H1 (cell line): ENCODE measurements at regions of chr4 and their contacts with region 1.

Region 1: DNA sequence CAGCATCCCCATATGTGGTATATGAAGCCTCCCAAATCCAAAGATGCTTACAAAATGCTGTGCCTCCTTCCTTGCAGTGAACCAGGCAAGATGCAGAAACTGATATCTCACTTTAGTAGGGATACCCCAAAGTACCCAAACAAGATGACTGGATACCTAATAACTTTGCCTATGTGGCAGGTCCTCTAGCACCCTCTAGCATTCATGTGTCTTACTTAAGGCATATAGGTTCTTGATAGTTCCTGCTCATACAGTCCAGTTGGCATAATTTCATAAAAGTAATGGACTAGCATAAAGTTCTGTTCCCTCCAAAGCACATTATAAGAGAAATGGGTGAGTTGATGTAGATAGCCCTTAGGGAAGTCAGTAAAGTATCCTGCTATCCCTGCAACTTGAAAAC is 36.8 kb upstream of the SPP1 start:
- DNase-seq: no peak
- H3K4me3 ChIP-seq: no peak overlapping the region
- H3K27ac ChIP-seq: no peak overlapping the region
- H3K4me1 ChIP-seq: peaks cover 0 to 3% (median 0%) of the 10 kb centered on the region in 4 experiments; a peak in 3 of 7 replicates
- H3K27me3 ChIP-seq: no peaks in the 10 kb centered on the region
- CTCF ChIP-seq: no peak
- EP300 ChIP-seq: no peak
- POLR2A ChIP-seq: no peak
- RAD21 ChIP-seq: peak in 1 of 2 experiments; percentile 7; a peak in 1 of 4 replicates

Region 2: DNA sequence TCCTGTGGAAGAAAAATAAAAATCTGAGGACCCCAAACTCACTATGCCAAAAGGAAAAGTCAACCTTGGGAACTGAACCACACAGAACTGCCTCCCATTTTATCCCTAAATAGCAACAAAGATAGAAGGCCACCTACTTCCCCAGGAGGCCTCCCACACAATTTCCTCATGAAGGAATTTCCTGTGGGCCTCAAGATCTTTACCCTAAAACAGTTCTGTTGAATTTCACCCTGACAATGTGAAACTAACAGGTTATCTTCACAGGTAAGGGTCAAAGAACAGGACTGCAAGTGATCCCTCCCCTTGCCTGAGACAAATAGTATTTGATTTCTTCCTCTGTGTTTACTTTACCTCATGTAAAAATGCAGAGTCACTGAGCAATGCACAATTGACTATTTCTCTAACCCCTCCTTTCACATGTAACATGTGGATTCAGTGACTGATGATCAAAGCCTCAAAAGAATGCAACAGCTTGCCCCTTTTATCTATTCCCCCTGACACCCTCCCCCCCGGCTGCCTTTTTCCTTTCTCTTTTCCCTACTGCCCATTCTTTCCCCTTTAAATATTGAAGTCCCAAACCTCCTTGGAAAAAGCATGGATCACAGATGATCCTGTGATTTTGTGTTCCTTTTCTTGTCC is 72.7 kb before region 1 on chr4:
- CTCF ChIA-PET with region 1: interaction called, 5 read pairs
- POLR2A ChIA-PET with region 1: interaction called, 369 read pairs
- DNase-seq: peak in 1 of 2 experiments; percentile 47
- H3K4me3 ChIP-seq: peak overlapping the region in 3 of 4 experiments; percentile 15 to 55 (median 15); a peak in 3 of 8 replicates
- H3K27ac ChIP-seq: peak overlapping the region; percentile 59; the same call in 1 of the 2 replicates
- H3K4me1 ChIP-seq: peaks cover 0 to 14% (median 7%) of the 10 kb centered on the region in 4 experiments; a peak in 3 of 7 replicates
- H3K27me3 ChIP-seq: no peaks in the 10 kb centered on the region
- CTCF ChIP-seq: no peak
- EP300 ChIP-seq: no peak; a peak in 1 of 3 replicates
- POLR2A ChIP-seq: peak; percentile 45 to 60; a peak in 2 of 3 replicates
- RAD21 ChIP-seq: no peak

Region 3: GRCh38 chr4:87884976-87885549 is 53.7 kb before region 1 on chr4:
- CTCF ChIA-PET with region 1: no interaction called
- POLR2A ChIA-PET with region 1: no interaction called
- DNase-seq: no peak
- H3K4me3 ChIP-seq: no peak overlapping the region
- H3K27ac ChIP-seq: no peak overlapping the region
- H3K4me1 ChIP-seq: no peaks in the 10 kb centered on the region
- H3K27me3 ChIP-seq: no peaks in the 10 kb centered on the region
- CTCF ChIP-seq: no peak
- EP300 ChIP-seq: no peak
- POLR2A ChIP-seq: no peak
- RAD21 ChIP-seq: no peak

Region 4: GRCh38 chr4:87926554-87927098 is 12.1 kb before region 1 on chr4:
- CTCF ChIA-PET with region 1: interaction called, 8 read pairs
- POLR2A ChIA-PET with region 1: interaction called, 156 read pairs
- DNase-seq: no peak
- H3K4me3 ChIP-seq: peak overlapping the region; percentile 34 to 69 (median 36)
- H3K27ac ChIP-seq: no peak overlapping the region
- H3K4me1 ChIP-seq: peaks cover 0 to 3% (median under 1%) of the 10 kb centered on the region in 4 experiments; a peak in 1 of 7 replicates
- H3K27me3 ChIP-seq: no peaks in the 10 kb centered on the region
- CTCF ChIP-seq: no peak
- EP300 ChIP-seq: no peak
- POLR2A ChIP-seq: peak; percentile 63 to 90
- RAD21 ChIP-seq: no peak

Region 5: GRCh38 chr4:87949961-87950360 is 11.2 kb after region 1 on chr4:
- CTCF ChIA-PET with region 1: interaction called, 4 read pairs
- POLR2A ChIA-PET with region 1: interaction called, 88 read pairs
- DNase-seq: no peak
- H3K4me3 ChIP-seq: no peak overlapping the region
- H3K27ac ChIP-seq: no peak overlapping the region
- H3K4me1 ChIP-seq: peaks cover 0 to 4% (median 1%) of the 10 kb centered on the region in 4 experiments; a peak in 5 of 7 replicates
- H3K27me3 ChIP-seq: no peaks in the 10 kb centered on the region; a peak in 1 of 7 replicates
- CTCF ChIP-seq: no peak
- EP300 ChIP-seq: no peak
- POLR2A ChIP-seq: no peak
- RAD21 ChIP-seq: no peak

Region 6: GRCh38 chr4:87961993-87962392 is 23.2 kb after region 1 on chr4:
- CTCF ChIA-PET with region 1: interaction called, 20 read pairs
- POLR2A ChIA-PET with region 1: interaction called, 88 read pairs
- DNase-seq: no peak
- H3K4me3 ChIP-seq: no peak overlapping the region
- H3K27ac ChIP-seq: no peak overlapping the region
- H3K4me1 ChIP-seq: peaks cover 0 to 4% (median 2%) of the 10 kb centered on the region in 4 experiments; a peak in 2 of 7 replicates
- H3K27me3 ChIP-seq: no peaks in the 10 kb centered on the region; a peak in 1 of 7 replicates
- CTCF ChIP-seq: no peak
- EP300 ChIP-seq: no peak
- POLR2A ChIP-seq: no peak
- RAD21 ChIP-seq: no peak